GM13977 (cell line): ENCODE measurements at regions of chr12 and their contacts with region 1.

Region 1: GRCh38 chr12:57124259-57124877 is 3.9 kb upstream of the LRP1 start:
- DNase-seq: peak; percentile 80
- CTCF ChIP-seq: peak; percentile 93

Region 2: DNA sequence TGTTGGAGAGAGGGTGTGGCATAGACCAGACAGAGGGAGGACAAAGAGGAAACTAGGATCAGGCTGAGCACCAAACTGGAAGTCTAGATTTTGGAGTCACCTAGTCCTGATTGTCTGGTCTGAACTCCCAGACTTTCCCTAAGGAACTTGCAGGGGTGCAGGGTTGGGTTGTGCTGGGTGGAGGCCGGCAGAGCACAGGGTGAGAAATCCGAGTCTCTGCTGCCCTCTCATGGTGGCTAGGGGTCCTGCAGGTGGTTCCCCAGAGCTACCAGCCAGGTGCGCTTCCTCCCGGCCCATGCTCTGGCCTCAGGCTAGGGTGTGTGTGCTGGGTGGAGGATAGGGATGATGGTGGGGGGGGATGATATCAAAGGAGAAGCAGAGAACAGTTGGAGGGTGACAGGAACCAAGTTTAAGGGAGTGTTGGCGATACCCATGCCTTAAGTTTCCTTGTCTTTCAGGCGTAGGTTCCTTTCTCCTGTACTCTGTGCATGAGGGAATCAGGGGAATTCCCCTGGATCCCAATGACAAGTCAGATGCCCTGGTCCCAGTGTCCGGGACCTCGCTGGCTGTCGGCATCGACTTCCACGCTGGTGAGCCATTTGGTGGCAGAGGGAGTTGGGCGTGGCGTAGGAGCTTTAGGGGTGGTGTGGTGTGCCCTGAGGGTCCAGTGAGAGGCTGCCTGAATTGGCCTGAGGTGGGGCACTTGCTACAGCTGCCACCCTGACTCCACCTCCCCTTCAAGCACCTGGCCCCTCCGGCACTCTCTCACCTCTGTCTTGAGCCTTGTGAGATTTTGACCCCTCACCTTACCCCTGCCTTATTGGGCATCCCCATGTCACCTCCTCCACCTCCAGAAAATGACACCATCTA is 58.8 kb after region 1 on chr12:
- in situ Hi-C with region 1: loop called (anchors 5 kb)
- DNase-seq: peak; percentile 97
- CTCF ChIP-seq: peak; percentile 97